GM12878 (cell line): ENCODE measurements at regions of chr17 and their contacts with region 1.

Region 1: GRCh38 chr17:37373530-37374159 is 2.1 kb upstream of the C17orf78 start:
- DNase-seq: no peak
- ATAC-seq: peak; percentile 99
- H3K4me3 ChIP-seq: no peak overlapping the region
- H3K27ac ChIP-seq: no peak overlapping the region
- H3K4me1 ChIP-seq: no peaks in the 10 kb centered on the region
- H3K27me3 ChIP-seq: no peaks in the 10 kb centered on the region
- CTCF ChIP-seq: peak; percentile 99 to 100 (median 100); a peak in 5 of 6 replicates
- EP300 ChIP-seq: no peak
- POLR2A ChIP-seq: no peak
- RAD21 ChIP-seq: peak; percentile 100

Region 2: DNA sequence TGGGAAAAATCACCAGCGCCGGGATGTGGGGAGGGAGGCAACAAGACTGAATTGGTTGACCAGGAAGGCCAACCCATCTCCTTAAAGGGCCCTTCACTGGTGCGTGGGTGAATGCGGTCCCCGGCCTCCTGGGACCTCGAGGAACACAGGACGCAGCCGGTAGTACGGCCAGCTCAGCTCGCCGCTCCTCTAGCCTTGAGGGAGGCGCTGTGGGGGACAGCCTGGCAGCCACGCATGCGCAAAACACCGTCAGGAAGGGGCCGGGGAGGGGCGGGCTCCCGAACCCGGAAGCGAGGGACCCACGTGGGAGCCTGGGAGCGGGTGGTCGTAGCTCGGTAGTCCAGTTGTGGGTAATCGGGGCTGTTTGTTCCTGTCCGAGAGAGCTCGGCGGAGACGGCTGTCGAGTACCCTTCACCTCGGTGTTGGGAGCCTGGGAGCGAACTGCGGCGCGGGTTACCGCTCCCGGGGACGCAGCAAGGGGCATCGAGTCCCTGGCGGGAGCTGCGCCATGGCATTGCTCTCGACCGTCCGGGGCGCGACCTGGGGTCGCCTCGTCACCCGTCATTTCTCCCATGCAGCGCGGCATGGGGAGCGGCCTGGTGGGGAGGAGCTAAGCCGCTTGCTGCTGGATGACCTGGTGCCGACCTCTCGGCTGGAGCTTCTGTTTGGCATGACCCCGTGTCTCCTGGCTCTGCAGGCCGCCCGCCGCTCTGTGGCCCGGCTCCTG is 772.2 kb before region 1 on chr17 and contains the start of gene MRM1:
- CTCF ChIA-PET with region 1: interaction called, 42 read pairs
- POLR2A ChIA-PET with region 1: no interaction called
- RAD21 ChIA-PET with region 1: interaction called, 17 read pairs
- SMC1A ChIA-PET with region 1: interaction called, 4 read pairs
- in situ Hi-C with region 1: loop called (anchors 10 kb)
- intact Hi-C with region 1: no loop called
- DNase-seq: peak; percentile 77
- ATAC-seq: peak; percentile 92
- H3K4me3 ChIP-seq: peak within 1 kb of the TSS; percentile 89
- H3K27ac ChIP-seq: peak within 1 kb of the TSS; percentile 90
- H3K4me1 ChIP-seq: peaks cover 13% of the 10 kb centered on the region
- H3K27me3 ChIP-seq: no peaks in the 10 kb centered on the region
- CTCF ChIP-seq: peak in 1 of 3 experiments; percentile 28; a peak in 4 of 6 replicates
- EP300 ChIP-seq: peak in 1 of 2 experiments; percentile 25; a peak in 1 of 4 replicates
- POLR2A ChIP-seq: peak; percentile 96
- RAD21 ChIP-seq: no peak
- polyA plus RNA-seq, gene MRM1: 0.23 to 1.7 TPM

Region 3: GRCh38 chr17:37239690-37240334 is 133.8 kb before region 1 on chr17:
- CTCF ChIA-PET with region 1: interaction called, 16 read pairs
- POLR2A ChIA-PET with region 1: no interaction called
- RAD21 ChIA-PET with region 1: interaction called, 16 read pairs
- SMC1A ChIA-PET with region 1: interaction called, 3 read pairs
- in situ Hi-C with region 1: no loop called
- intact Hi-C with region 1: no loop called
- DNase-seq: no peak
- ATAC-seq: no peak
- H3K4me3 ChIP-seq: no peak overlapping the region
- H3K27ac ChIP-seq: no peak overlapping the region
- H3K4me1 ChIP-seq: no peaks in the 10 kb centered on the region
- H3K27me3 ChIP-seq: no peaks in the 10 kb centered on the region
- CTCF ChIP-seq: peak; percentile 43 to 67 (median 60); a peak in 5 of 6 replicates
- EP300 ChIP-seq: no peak
- POLR2A ChIP-seq: no peak
- RAD21 ChIP-seq: peak; percentile 53

Region 4: GRCh38 chr17:37392024-37392590 is 18.5 kb after region 1 on chr17:
- CTCF ChIA-PET with region 1: interaction called, 187 read pairs
- POLR2A ChIA-PET with region 1: interaction called, 3 read pairs
- RAD21 ChIA-PET with region 1: interaction called, 81 read pairs
- SMC1A ChIA-PET with region 1: interaction called, 81 read pairs
- in situ Hi-C with region 1: no loop called
- intact Hi-C with region 1: loop called (anchors 1 kb)
- DNase-seq: no peak
- ATAC-seq: peak; percentile 91
- H3K4me3 ChIP-seq: peak overlapping the region; percentile 37; the same call in 1 of the 2 replicates
- H3K27ac ChIP-seq: peak overlapping the region; percentile 71
- H3K4me1 ChIP-seq: peaks cover 26% of the 10 kb centered on the region
- H3K27me3 ChIP-seq: no peaks in the 10 kb centered on the region
- CTCF ChIP-seq: no peak
- EP300 ChIP-seq: no peak
- POLR2A ChIP-seq: no peak
- RAD21 ChIP-seq: no peak

Region 5: GRCh38 chr17:37489197-37490001 is 115.8 kb after region 1 on chr17 and contains the start of gene DUSP14:
- CTCF ChIA-PET with region 1: interaction called, 10 read pairs
- POLR2A ChIA-PET with region 1: interaction called, 3 read pairs
- RAD21 ChIA-PET with region 1: interaction called, 3 read pairs
- SMC1A ChIA-PET with region 1: interaction called, 8 read pairs
- in situ Hi-C with region 1: no loop called
- intact Hi-C with region 1: loop called (anchors 2 kb)
- DNase-seq: no peak
- ATAC-seq: peak; percentile 76
- H3K4me3 ChIP-seq: peak within 1 kb of the TSS; percentile 92
- H3K27ac ChIP-seq: peak within 1 kb of the TSS; percentile 53
- H3K4me1 ChIP-seq: peaks cover 17% of the 10 kb centered on the region
- H3K27me3 ChIP-seq: no peaks in the 10 kb centered on the region
- CTCF ChIP-seq: peak in 1 of 3 experiments; percentile 13; a peak in 1 of 6 replicates
- EP300 ChIP-seq: no peak
- POLR2A ChIP-seq: peak; percentile 88
- RAD21 ChIP-seq: no peak
- polyA plus RNA-seq, gene DUSP14: 21.1 to 36.5 TPM

Region 6: GRCh38 chr17:37818689-37819088 is 445.0 kb after region 1 on chr17:
- CTCF ChIA-PET with region 1: interaction called, 9 read pairs
- POLR2A ChIA-PET with region 1: no interaction called
- RAD21 ChIA-PET with region 1: interaction called, 10 read pairs
- SMC1A ChIA-PET with region 1: interaction called, 3 read pairs
- in situ Hi-C with region 1: no loop called
- intact Hi-C with region 1: no loop called
- DNase-seq: no peak
- ATAC-seq: no peak
- H3K4me3 ChIP-seq: no peak overlapping the region
- H3K27ac ChIP-seq: peak overlapping the region; percentile 30; the same call in 1 of the 2 replicates
- H3K4me1 ChIP-seq: peaks cover 30% of the 10 kb centered on the region
- H3K27me3 ChIP-seq: no peaks in the 10 kb centered on the region
- CTCF ChIP-seq: no peak
- EP300 ChIP-seq: no peak
- POLR2A ChIP-seq: no peak
- RAD21 ChIP-seq: no peak